ENCODE measurements at regions of chr1 and their contacts with region 1.

Region 1: DNA sequence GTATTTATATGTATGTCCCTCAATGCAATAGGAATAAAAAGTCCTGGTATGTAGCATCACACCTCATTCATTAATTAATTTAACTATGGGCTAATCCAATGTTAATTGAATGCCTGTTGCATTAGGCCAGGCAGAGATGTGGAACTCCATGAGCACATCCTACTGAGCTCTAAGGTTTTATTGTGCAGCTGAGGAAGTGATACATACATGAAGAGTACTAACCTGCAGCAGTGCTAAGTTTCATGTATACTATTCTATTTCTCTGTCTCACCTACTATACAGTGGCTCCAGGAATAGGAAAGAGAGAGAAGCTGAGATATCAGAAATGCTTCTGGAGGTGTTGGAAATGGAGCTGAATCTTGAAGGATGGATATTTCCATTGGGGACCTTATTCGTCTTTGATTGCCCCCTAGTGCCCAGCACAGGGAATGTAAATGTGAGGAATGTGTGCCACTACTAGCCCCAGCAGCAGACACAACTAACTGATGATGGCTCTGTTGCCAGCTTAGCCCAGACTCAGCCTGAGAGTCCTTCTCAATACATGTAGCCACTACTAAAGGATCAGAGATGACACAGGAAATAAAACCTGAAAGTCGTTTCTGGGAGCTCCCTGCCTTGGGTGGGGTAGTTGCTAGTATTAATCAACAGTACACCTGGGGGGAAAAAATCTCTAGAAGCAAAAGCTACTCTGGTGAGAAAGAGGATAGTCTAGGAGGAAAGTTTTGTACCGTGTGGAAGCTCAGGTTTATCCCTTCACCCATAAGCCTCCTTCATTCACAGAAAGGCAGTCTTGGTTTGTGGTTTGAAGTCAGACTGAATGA is 173.3 kb upstream of the FOXD3 start:
- DNase-seq: peak; percentile 32
- ATAC-seq: peak; percentile 87
- H3K4me3 ChIP-seq: no peak overlapping the region
- H3K27ac ChIP-seq: no peak overlapping the region
- H3K4me1 ChIP-seq: no peaks in the 10 kb centered on the region
- H3K27me3 ChIP-seq: peaks cover 0 to 4% of the 10 kb centered on the region in 2 experiments; a peak in 1 of 5 replicates
- CTCF ChIP-seq: peak; percentile 75
- EP300 ChIP-seq: no peak
- POLR2A ChIP-seq: no peak
- RAD21 ChIP-seq: no peak; the same call in 1 of the 2 replicates

Region 2: GRCh38 chr1:62962901-62963776 is 185.9 kb before region 1 on chr1:
- CTCF ChIA-PET with region 1: interaction called, 7 read pairs
- POLR2A ChIA-PET with region 1: no interaction called
- in situ Hi-C with region 1: loop called (anchors 10 kb)
- intact Hi-C with region 1: loop called (anchors 1 kb)
- DNase-seq: peak; percentile 30
- ATAC-seq: peak; percentile 96
- H3K4me3 ChIP-seq: no peak overlapping the region
- H3K27ac ChIP-seq: no peak overlapping the region
- H3K4me1 ChIP-seq: no peaks in the 10 kb centered on the region
- H3K27me3 ChIP-seq: no peaks in the 10 kb centered on the region
- CTCF ChIP-seq: peak; percentile 79
- EP300 ChIP-seq: no peak
- POLR2A ChIP-seq: no peak
- RAD21 ChIP-seq: 0 out of 2 replicates have a peak, but pooled peaks have one; percentile 33

Region 3: GRCh38 chr1:63004868-63005267 is 144.2 kb before region 1 on chr1:
- CTCF ChIA-PET with region 1: no interaction called
- POLR2A ChIA-PET with region 1: no interaction called
- in situ Hi-C with region 1: no loop called
- intact Hi-C with region 1: loop called (anchors 10 kb)
- DNase-seq: peak; percentile 3
- ATAC-seq: peak; percentile 61; the same call in 2 of the 3 replicates
- H3K4me3 ChIP-seq: no peak overlapping the region
- H3K27ac ChIP-seq: no peak overlapping the region
- H3K4me1 ChIP-seq: no peaks in the 10 kb centered on the region
- H3K27me3 ChIP-seq: peaks cover 1 to 8% of the 10 kb centered on the region in 2 experiments; a peak in 3 of 5 replicates
- CTCF ChIP-seq: peak; percentile 61
- EP300 ChIP-seq: no peak
- POLR2A ChIP-seq: no peak
- RAD21 ChIP-seq: 0 out of 2 replicates have a peak, but pooled peaks have one; percentile 12

Measured in HepG2 (cell line).